ENCODE measurements at regions of chr20 and their contacts with region 1.

Region 1: DNA sequence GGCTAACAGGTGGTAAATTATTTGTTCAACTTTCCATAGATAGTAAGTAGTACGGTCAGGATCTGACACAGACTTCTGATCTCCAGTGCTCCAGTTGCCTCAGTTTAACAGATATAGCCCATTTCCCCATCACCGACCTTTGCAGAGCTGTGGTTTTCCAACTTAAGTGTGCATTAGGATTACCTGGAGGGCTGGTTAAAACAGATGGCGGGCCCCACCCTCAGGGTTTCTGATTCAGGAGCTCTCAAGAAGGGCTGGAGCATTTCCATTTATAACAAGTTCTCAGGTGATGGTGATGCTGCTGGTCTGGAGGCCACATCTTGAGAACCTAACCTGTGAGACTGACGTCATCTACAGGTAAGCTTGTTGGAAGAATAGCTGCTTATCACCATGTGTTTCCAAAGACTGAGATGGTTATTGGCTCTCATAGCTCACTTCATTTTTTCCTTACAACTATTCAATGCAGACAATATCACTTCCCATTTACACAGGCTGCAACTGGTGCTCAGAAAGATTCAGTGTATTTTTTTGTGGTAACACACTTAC is 360.1 kb upstream of the CHD6 start:
- DNase-seq: no peak
- ATAC-seq: no peak
- H3K4me3 ChIP-seq: no peak overlapping the region
- H3K4me3 Mint-ChIP-seq: no peak overlapping the region
- H3K27ac ChIP-seq: no peak overlapping the region
- H3K27ac Mint-ChIP-seq: no peak overlapping the region
- H3K4me1 ChIP-seq: no peaks in the 10 kb centered on the region
- H3K4me1 Mint-ChIP-seq: no peaks in the 10 kb centered on the region
- H3K27me3 ChIP-seq: no peaks in the 10 kb centered on the region
- H3K27me3 Mint-ChIP-seq: no peaks in the 10 kb centered on the region
- CTCF ChIP-seq: no peak

Region 2: GRCh38 chr20:41889126-41889870 is 89.0 kb before region 1 on chr20:
- CTCF ChIA-PET with region 1: no interaction called
- POLR2A ChIA-PET with region 1: no interaction called
- intact Hi-C with region 1: no loop called
- DNase-seq: no peak
- ATAC-seq: no peak
- H3K4me3 ChIP-seq: no peak overlapping the region
- H3K4me3 Mint-ChIP-seq: no peak overlapping the region
- H3K27ac ChIP-seq: no peak overlapping the region
- H3K27ac Mint-ChIP-seq: no peak overlapping the region
- H3K4me1 ChIP-seq: no peaks in the 10 kb centered on the region
- H3K4me1 Mint-ChIP-seq: no peaks in the 10 kb centered on the region
- H3K27me3 ChIP-seq: no peaks in the 10 kb centered on the region
- H3K27me3 Mint-ChIP-seq: peaks cover 2% of the 10 kb centered on the region
- CTCF ChIP-seq: no peak

Region 3: DNA sequence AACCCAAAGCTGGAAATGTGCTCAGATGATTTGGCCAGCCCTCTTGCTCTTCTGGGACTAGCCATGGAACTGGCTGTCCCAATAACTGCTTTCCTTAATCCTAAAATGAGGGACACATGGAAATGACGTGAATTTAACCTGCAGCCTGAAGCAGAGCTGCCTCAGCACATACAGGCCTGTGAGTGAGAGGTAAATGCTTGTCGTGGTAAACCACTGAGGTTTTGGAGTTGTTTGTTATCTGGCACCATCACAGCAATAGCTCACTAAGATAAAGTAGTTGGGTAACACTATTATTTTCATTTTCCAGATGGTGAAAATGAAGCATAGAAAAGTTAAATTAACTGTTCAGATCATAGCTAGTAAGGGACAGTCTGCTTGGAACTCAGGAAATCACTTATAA is 26.7 kb before region 1 on chr20:
- CTCF ChIA-PET with region 1: no interaction called
- POLR2A ChIA-PET with region 1: no interaction called
- intact Hi-C with region 1: loop called in 1 of 2 experiments (anchors 1 kb)
- DNase-seq: no peak
- ATAC-seq: no peak
- H3K4me3 ChIP-seq: no peak overlapping the region
- H3K4me3 Mint-ChIP-seq: no peak overlapping the region
- H3K27ac ChIP-seq: no peak overlapping the region
- H3K27ac Mint-ChIP-seq: no peak overlapping the region
- H3K4me1 ChIP-seq: no peaks in the 10 kb centered on the region
- H3K4me1 Mint-ChIP-seq: no peaks in the 10 kb centered on the region
- H3K27me3 ChIP-seq: no peaks in the 10 kb centered on the region
- H3K27me3 Mint-ChIP-seq: peaks cover 2% of the 10 kb centered on the region
- CTCF ChIP-seq: no peak